ENCODE measurements at regions of chr1 and their contacts with region 1.

Region 1: DNA sequence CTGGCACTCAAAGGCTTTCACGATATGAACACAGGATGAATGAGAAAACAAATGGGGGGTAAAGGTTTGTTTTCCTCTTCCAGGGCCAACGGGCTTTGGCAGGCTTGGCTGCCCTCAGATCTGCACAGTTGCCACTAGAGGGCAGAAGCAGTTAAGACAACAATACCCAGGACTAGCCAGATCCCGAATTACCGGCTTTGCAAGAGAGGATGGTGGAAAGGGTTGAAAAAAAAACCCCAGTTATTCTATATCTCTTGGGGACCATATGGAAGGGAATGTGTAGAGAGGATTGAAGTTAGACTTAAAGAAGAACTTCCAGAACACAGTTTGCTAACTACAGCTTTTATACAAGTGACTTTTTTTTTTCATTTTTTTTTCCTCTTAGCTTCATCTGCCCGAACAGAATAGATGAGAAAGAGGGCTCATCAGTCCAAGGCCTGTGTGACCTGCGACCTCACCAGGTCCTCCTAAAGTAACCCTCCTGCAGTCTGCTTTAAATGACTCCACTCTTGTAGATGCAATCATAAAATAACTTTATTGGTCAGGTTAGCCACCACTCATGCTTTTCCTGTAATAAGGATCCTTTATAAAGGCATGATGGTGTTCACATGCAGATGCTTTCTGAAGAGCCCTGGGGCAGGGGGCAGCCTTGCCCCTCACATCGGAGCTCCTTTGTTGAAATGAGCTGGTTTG is 10.7 kb downstream of the FMOD start:
- DNase-seq: peak; percentile 88

Region 2: GRCh38 chr1:203273206-203273868 is 66.9 kb before region 1 on chr1:
- CTCF ChIA-PET with region 1: interaction called, 36 read pairs
- POLR2A ChIA-PET with region 1: no interaction called
- DNase-seq: peak; percentile 83

Region 3: DNA sequence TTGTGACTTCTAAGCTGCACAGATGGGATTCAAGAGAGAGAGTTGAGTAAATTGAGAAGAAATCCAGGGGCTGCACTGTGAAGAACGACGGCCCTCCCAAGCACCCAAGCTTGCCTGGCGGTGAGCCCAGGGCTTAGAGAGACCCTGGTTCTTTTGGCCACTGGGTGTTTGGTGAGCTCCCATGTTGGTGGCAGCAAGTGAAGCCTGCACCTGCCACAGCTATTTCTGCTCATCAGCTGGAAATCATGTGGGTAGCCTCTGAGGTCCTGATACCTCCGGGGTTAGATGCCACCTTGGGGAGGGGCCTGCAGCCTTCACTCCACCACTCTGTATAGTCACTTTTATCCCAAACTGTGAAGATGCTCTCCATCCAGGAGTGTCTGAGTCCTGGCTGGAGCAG is 41.1 kb before region 1 on chr1:
- CTCF ChIA-PET with region 1: no interaction called
- POLR2A ChIA-PET with region 1: no interaction called
- DNase-seq: no peak

Region 4: DNA sequence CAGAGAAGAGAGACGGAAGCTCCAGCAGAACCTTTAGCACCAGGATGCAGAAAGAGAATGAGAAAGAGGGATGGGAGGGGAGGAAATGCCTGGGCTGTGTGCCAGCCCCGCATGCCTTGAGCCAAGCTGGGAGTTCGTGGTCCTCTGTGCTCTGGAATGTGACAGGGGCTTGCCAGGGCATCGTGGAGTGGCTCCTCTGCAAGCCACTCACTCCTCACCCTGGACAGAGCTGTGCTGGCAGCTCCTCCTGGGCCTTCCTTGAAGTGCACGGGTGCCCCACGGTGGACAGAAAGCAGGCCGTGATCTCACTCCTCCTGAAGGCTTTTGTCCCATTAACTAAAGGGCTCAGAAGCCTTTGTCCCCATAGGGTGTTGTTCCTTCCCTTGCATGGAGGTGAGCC is 100.5 kb after region 1 on chr1:
- CTCF ChIA-PET with region 1: interaction called, 17 read pairs
- POLR2A ChIA-PET with region 1: interaction called, 3 read pairs
- DNase-seq: peak; percentile 30

Region 5: GRCh38 chr1:203486618-203487370 is 146.5 kb after region 1 on chr1:
- CTCF ChIA-PET with region 1: interaction called, 18 read pairs
- POLR2A ChIA-PET with region 1: interaction called, 3 read pairs
- DNase-seq: no peak